CD8-positive, alpha-beta T cell (primary cell): ENCODE measurements at regions of chr12 and their contacts with region 1.

Region 1: DNA sequence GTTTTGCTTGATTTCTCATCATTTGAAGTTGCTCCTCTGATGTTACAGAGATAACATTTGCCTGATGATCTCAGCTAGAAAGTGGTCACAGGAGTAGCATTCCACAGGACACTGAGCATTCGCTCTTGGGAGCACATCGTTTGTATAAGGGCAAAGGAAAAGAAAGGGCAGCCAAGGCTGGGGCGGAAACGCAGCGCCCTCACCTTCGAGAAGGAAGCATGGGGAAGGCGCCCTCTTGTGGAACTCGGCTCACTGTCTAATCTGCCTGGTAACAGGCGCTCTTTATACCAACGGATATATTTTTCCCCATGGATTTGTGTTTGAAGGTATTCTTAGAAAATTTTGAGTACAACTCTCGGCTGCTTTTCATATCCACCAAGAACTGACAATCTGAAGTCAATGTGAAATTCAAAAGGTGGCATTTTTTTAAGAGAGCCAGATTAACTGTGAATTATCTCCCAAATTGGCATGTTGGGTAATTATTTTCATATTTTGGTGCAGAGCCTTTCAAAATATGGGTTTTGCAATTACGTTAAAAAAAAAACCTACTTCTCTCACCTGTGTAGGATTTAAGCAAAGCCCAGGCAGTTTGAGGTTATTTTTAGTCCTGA is 172.7 kb downstream of the CAND1 start:
- DNase-seq: peak; percentile 55 to 89 (median 80)
- ATAC-seq: peak; percentile 98
- H3K4me3 ChIP-seq: no peak overlapping the region
- H3K4me3 Mint-ChIP-seq: peak overlapping the region; percentile 45
- H3K27ac ChIP-seq: no peak overlapping the region
- H3K27ac Mint-ChIP-seq: peak overlapping the region; percentile 60
- H3K4me1 ChIP-seq: peaks cover 13% of the 10 kb centered on the region
- H3K4me1 Mint-ChIP-seq: peaks cover 26% of the 10 kb centered on the region
- H3K27me3 ChIP-seq: no peaks in the 10 kb centered on the region
- H3K27me3 Mint-ChIP-seq: no peaks in the 10 kb centered on the region
- CTCF ChIP-seq: peak; percentile 70

Region 2: DNA sequence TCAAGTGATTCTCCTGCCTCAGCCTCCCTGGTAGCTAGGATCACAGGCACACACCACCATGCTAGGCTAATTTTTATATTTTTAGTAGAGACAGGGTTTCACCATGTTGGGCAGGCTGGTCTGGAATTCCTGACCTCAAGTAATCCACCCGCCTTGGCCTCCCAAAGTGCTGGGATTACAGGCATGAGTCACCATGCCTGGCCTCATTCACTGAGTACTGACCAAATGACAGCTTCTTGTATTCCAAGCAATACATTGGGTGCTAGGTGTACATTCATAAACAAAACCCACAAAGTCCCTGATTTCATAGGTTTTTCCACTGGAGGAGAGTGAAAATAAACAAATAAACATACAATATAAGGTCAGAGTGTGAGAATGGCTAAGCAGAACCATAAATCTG is 1003.2 kb before region 1 on chr12:
- CTCF ChIA-PET with region 1: no interaction called
- POLR2A ChIA-PET with region 1: no interaction called
- intact Hi-C with region 1: no loop called
- DNase-seq: no peak
- ATAC-seq: no peak
- H3K4me3 ChIP-seq: no peak overlapping the region
- H3K4me3 Mint-ChIP-seq: no peak overlapping the region
- H3K27ac ChIP-seq: no peak overlapping the region
- H3K27ac Mint-ChIP-seq: no peak overlapping the region
- H3K4me1 ChIP-seq: no peaks in the 10 kb centered on the region
- H3K4me1 Mint-ChIP-seq: no peaks in the 10 kb centered on the region
- H3K27me3 ChIP-seq: no peaks in the 10 kb centered on the region
- H3K27me3 Mint-ChIP-seq: no peaks in the 10 kb centered on the region
- CTCF ChIP-seq: no peak

Region 3: DNA sequence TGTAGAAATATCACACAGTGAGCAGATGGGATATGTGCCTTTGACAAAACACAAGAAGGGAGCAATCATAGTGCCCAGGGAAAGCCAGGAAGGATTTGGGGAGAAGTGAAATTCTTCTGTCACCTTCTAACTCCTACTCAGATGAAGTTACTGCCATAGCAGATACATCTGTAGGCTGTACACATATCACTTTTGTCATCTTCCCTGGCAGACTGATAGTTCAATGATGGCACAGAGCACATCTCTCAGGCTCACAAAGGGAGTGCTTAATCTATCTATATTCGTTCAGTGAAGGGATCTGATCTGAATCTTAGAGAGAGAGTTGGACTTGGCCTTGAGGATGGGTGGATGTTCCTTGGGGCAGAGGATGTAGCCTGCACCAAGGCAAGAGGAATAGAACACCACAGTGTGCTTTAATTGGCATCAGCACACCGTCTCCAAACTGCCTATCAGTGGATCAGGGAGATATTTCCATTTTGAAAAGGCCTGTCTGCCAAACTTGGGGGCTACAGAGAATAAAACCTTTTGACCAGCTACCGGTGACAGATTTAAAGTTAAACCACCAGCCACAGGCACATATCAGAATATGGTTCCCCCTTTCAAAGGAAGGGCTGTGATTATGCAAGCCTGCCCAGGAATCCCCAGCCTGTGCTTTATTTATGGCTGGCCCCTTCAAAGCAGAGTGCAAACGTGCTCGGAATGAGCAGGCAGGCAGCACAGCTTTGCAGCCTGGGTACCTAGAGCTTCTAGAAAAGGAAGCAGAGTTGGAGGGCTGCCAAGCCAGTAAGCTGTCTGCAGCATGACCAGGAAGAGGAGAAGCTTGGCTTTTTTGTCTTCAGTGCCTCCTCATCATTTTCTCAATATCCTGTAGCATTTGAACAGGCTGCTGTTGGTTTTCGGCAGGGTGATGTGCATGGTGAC is 41.2 kb after region 1 on chr12:
- CTCF ChIA-PET with region 1: interaction called, 12 read pairs
- POLR2A ChIA-PET with region 1: no interaction called
- intact Hi-C with region 1: loop called (anchors 1 to 5 kb)
- DNase-seq: peak; percentile 46 to 91 (median 85)
- ATAC-seq: peak; percentile 91
- H3K4me3 ChIP-seq: no peak overlapping the region
- H3K4me3 Mint-ChIP-seq: peak overlapping the region; percentile 12
- H3K27ac ChIP-seq: peak overlapping the region; percentile 23 to 58
- H3K27ac Mint-ChIP-seq: peak overlapping the region; percentile 80
- H3K4me1 ChIP-seq: peaks cover 40% of the 10 kb centered on the region
- H3K4me1 Mint-ChIP-seq: peaks cover 45% of the 10 kb centered on the region
- H3K27me3 ChIP-seq: no peaks in the 10 kb centered on the region
- H3K27me3 Mint-ChIP-seq: no peaks in the 10 kb centered on the region
- CTCF ChIP-seq: no peak

Region 4: DNA sequence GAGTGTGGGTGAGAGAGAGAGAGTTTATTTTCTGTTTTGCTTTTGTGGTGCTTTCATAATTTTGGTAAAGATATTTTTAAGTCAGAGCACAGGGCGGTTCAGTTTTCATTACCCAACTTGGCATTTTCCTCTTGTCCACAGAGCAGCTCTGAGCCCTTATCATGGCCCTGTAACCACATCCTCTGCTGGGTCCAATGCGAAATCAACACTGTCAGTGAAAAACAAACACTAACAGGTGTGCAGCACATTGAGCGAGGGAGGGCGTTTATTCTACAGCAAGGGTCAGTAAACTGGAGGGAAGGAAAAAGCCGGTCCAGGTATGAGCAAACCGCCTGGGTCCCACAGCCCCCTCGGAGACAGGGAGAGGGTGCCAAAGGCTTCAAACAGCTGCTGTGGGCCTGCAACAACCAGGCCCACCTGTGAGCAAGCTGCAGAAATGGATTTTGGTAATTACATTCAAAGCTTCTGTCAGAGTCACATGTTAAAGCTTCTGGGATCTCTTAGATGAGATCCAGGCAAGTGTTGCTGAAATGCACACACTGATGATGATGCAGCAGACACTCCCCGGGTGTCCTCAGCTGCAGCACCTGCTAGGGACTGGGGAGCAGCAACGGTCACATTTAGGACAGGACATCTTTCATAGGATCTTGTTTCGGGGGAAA is 74.0 kb after region 1 on chr12:
- CTCF ChIA-PET with region 1: interaction called, 5 read pairs
- POLR2A ChIA-PET with region 1: no interaction called
- intact Hi-C with region 1: loop called in 1 of 2 experiments (anchors 5 kb)
- DNase-seq: peak in 8 of 9 experiments; percentile 8 to 76 (median 44)
- ATAC-seq: peak; percentile 81
- H3K4me3 ChIP-seq: peak overlapping the region in 1 of 2 experiments; percentile 13
- H3K4me3 Mint-ChIP-seq: peak overlapping the region; percentile 63
- H3K27ac ChIP-seq: peak overlapping the region in 1 of 2 experiments; percentile 63
- H3K27ac Mint-ChIP-seq: peak overlapping the region; percentile 83
- H3K4me1 ChIP-seq: peaks cover 41% of the 10 kb centered on the region
- H3K4me1 Mint-ChIP-seq: peaks cover 54% of the 10 kb centered on the region
- H3K27me3 ChIP-seq: no peaks in the 10 kb centered on the region
- H3K27me3 Mint-ChIP-seq: no peaks in the 10 kb centered on the region
- CTCF ChIP-seq: no peak

Region 5: DNA sequence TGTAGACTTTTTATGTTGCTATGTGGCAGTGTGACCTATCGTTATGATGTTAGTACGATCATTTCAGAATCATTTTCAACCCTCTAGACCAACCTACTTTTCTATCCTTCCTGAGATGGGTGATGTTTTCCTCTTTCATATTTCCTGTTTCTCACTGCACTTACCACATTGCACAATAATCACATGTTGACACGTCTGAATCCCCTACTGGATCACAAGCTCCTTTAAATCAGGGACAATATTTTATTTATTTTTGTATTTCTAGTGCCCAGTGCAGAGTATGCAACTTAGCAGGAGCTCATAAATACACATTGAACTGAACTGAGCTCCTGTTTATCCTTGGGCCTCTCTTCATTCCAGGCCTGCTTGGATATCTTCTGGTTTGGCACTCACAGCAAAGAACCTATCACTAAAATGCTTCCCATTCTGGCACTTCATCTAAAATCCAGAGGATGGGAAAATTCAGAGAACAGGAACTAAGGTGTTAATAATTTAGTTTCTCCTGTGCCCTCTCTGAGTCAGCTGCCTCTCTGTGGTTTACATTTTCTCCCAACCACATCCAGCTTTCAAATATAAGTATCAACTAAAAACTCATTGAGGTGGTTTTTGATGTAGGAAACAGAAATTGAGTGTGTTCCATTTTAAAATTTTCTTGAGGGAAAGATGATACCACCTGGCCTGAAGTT is 137.3 kb after region 1 on chr12:
- CTCF ChIA-PET with region 1: interaction called, 4 read pairs
- POLR2A ChIA-PET with region 1: no interaction called
- intact Hi-C with region 1: loop called in 1 of 2 experiments (anchors 1 kb)
- DNase-seq: peak in 6 of 9 experiments; percentile 4 to 71 (median 28)
- ATAC-seq: peak; percentile 78
- H3K4me3 ChIP-seq: peak overlapping the region; percentile 4 to 21
- H3K4me3 Mint-ChIP-seq: peak overlapping the region; percentile 56
- H3K27ac ChIP-seq: peak overlapping the region; percentile 11 to 76
- H3K27ac Mint-ChIP-seq: peak overlapping the region; percentile 69
- H3K4me1 ChIP-seq: peaks cover 34% of the 10 kb centered on the region
- H3K4me1 Mint-ChIP-seq: peaks cover 57% of the 10 kb centered on the region
- H3K27me3 ChIP-seq: no peaks in the 10 kb centered on the region
- H3K27me3 Mint-ChIP-seq: no peaks in the 10 kb centered on the region
- CTCF ChIP-seq: no peak

Region 6: DNA sequence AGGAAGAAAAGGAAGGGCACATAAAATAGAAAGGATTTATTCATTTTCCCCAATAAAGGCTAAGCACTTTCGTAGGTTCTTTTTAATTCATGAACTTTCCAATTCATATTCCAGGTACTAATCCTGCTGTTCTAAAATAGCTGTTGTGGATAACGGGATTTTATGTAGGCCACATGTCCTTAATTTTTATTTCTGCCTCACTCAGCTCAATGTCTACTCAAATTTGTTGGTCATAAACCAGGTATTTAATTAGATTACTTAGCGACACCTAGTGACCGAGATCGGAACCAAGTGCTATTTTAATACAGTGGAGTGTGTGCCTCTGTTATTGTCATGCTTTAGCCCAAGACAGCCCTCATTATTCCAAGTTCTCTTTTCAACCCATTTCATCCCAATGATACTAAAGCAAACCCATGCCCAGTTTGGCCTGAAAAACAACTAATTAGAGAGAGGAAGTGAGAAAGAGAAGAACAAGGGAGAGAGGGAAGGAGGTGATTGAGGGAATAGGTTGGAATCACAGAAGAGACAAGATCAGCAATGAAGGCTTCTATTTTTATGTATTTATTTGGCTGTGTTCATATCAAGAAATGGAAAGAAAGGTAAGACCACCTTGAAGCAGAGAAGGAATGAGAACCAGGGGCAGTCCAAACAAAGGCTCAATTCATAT is 501.5 kb after region 1 on chr12:
- CTCF ChIA-PET with region 1: interaction called, 14 read pairs
- POLR2A ChIA-PET with region 1: no interaction called
- intact Hi-C with region 1: loop called (anchors 1 to 5 kb)
- DNase-seq: peak; percentile 30 to 80 (median 69)
- ATAC-seq: peak; percentile 78
- H3K4me3 ChIP-seq: no peak overlapping the region
- H3K4me3 Mint-ChIP-seq: no peak overlapping the region
- H3K27ac ChIP-seq: no peak overlapping the region
- H3K27ac Mint-ChIP-seq: no peak overlapping the region
- H3K4me1 ChIP-seq: no peaks in the 10 kb centered on the region
- H3K4me1 Mint-ChIP-seq: peaks cover 7% of the 10 kb centered on the region
- H3K27me3 ChIP-seq: no peaks in the 10 kb centered on the region
- H3K27me3 Mint-ChIP-seq: peaks cover 6% of the 10 kb centered on the region
- CTCF ChIP-seq: peak; percentile 83